ENCODE measurements at regions of chr10 and their contacts with region 1.

Region 1: GRCh38 chr10:103685880-103686669 is 169.3 kb downstream of the SH3PXD2A start:
- DNase-seq: no peak
- ATAC-seq: peak; percentile 90
- H3K4me3 ChIP-seq: no peak overlapping the region
- H3K27ac ChIP-seq: no peak overlapping the region
- H3K4me1 ChIP-seq: peaks cover 16% of the 10 kb centered on the region
- H3K27me3 ChIP-seq: no peaks in the 10 kb centered on the region
- CTCF ChIP-seq: peak; percentile 94 to 99 (median 98)
- EP300 ChIP-seq: no peak
- POLR2A ChIP-seq: no peak
- RAD21 ChIP-seq: peak; percentile 90

Region 2: GRCh38 chr10:102101152-102101551 is 1584.9 kb before region 1 on chr10:
- CTCF ChIA-PET with region 1: no interaction called
- POLR2A ChIA-PET with region 1: no interaction called
- RAD21 ChIA-PET with region 1: no interaction called
- SMC1A ChIA-PET with region 1: no interaction called
- in situ Hi-C with region 1: no loop called
- intact Hi-C with region 1: no loop called
- DNase-seq: no peak
- ATAC-seq: no peak
- H3K4me3 ChIP-seq: no peak overlapping the region
- H3K27ac ChIP-seq: no peak overlapping the region
- H3K4me1 ChIP-seq: no peaks in the 10 kb centered on the region
- H3K27me3 ChIP-seq: no peaks in the 10 kb centered on the region
- CTCF ChIP-seq: no peak
- EP300 ChIP-seq: no peak
- POLR2A ChIP-seq: no peak
- RAD21 ChIP-seq: no peak

Region 3: GRCh38 chr10:103592186-103593021 is 93.7 kb before region 1 on chr10:
- CTCF ChIA-PET with region 1: interaction called, 13 read pairs
- POLR2A ChIA-PET with region 1: no interaction called
- RAD21 ChIA-PET with region 1: interaction called, 4 read pairs
- SMC1A ChIA-PET with region 1: interaction called, 5 read pairs
- in situ Hi-C with region 1: no loop called
- intact Hi-C with region 1: no loop called
- DNase-seq: no peak
- ATAC-seq: peak; percentile 95
- H3K4me3 ChIP-seq: no peak overlapping the region
- H3K27ac ChIP-seq: no peak overlapping the region
- H3K4me1 ChIP-seq: no peaks in the 10 kb centered on the region
- H3K27me3 ChIP-seq: no peaks in the 10 kb centered on the region
- CTCF ChIP-seq: peak; percentile 73 to 79 (median 77)
- EP300 ChIP-seq: no peak
- POLR2A ChIP-seq: no peak; the same call in none of the 2 replicates
- RAD21 ChIP-seq: peak; percentile 73

Region 4: DNA sequence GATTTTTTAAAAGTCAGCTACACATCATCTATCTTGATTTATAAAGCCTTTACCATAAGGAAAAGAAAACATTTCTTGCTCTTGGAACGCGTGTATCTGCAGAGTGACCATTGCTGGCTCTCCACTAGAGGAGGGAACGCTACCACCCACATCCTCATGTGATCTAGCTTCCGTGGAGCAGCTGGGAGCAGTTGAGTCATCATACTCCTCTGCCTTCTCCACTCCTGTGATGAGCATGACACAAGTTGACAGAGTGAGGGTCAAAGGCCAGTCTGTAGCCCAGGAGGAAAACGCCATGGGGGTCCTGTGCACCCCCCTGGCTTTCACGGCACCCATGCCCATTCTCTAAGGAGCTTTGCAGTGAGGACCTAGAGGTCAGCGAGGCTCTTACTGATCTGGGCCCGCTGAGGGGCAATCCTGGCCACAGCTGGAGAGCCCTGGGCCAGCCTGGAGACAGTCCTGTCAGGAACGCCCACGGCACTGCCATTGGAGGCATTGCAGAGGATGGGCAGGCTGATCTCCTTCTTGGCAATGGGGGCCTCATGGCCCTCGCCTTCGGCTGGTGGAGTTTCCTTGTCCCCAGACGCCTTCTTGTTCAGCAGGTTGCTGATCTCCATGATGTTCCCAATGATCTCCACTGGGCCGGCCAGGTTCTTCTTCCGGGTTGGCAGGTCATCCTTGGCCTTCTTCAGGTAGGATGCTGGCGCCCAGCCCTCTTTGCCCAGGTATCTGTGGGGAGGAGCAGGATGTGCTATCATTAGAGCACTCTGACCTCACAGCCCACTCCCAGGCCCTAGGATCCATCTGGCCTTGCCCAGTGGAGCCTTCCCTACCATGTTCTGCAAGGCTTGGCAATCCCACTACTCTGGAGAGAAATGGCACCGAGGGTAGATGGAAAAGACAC is 73.4 kb before region 1 on chr10:
- CTCF ChIA-PET with region 1: interaction called, 36 read pairs
- POLR2A ChIA-PET with region 1: interaction called, 3 read pairs
- RAD21 ChIA-PET with region 1: interaction called, 3 read pairs
- SMC1A ChIA-PET with region 1: interaction called, 3 read pairs
- in situ Hi-C with region 1: loop called (anchors 10 kb)
- intact Hi-C with region 1: no loop called
- DNase-seq: no peak
- ATAC-seq: no peak
- H3K4me3 ChIP-seq: no peak overlapping the region
- H3K27ac ChIP-seq: no peak overlapping the region
- H3K4me1 ChIP-seq: no peaks in the 10 kb centered on the region
- H3K27me3 ChIP-seq: no peaks in the 10 kb centered on the region
- CTCF ChIP-seq: no peak
- EP300 ChIP-seq: no peak
- POLR2A ChIP-seq: no peak
- RAD21 ChIP-seq: no peak

Region 5: GRCh38 chr10:103666087-103666761 is 19.9 kb before region 1 on chr10:
- CTCF ChIA-PET with region 1: interaction called, 31 read pairs
- POLR2A ChIA-PET with region 1: no interaction called
- RAD21 ChIA-PET with region 1: interaction called, 5 read pairs
- SMC1A ChIA-PET with region 1: interaction called, 5 read pairs
- in situ Hi-C with region 1: no loop called
- intact Hi-C with region 1: no loop called
- DNase-seq: no peak
- ATAC-seq: no peak
- H3K4me3 ChIP-seq: no peak overlapping the region
- H3K27ac ChIP-seq: no peak overlapping the region
- H3K4me1 ChIP-seq: no peaks in the 10 kb centered on the region
- H3K27me3 ChIP-seq: no peaks in the 10 kb centered on the region
- CTCF ChIP-seq: peak; percentile 21 to 47 (median 39)
- EP300 ChIP-seq: no peak
- POLR2A ChIP-seq: no peak
- RAD21 ChIP-seq: no peak

Region 6: DNA sequence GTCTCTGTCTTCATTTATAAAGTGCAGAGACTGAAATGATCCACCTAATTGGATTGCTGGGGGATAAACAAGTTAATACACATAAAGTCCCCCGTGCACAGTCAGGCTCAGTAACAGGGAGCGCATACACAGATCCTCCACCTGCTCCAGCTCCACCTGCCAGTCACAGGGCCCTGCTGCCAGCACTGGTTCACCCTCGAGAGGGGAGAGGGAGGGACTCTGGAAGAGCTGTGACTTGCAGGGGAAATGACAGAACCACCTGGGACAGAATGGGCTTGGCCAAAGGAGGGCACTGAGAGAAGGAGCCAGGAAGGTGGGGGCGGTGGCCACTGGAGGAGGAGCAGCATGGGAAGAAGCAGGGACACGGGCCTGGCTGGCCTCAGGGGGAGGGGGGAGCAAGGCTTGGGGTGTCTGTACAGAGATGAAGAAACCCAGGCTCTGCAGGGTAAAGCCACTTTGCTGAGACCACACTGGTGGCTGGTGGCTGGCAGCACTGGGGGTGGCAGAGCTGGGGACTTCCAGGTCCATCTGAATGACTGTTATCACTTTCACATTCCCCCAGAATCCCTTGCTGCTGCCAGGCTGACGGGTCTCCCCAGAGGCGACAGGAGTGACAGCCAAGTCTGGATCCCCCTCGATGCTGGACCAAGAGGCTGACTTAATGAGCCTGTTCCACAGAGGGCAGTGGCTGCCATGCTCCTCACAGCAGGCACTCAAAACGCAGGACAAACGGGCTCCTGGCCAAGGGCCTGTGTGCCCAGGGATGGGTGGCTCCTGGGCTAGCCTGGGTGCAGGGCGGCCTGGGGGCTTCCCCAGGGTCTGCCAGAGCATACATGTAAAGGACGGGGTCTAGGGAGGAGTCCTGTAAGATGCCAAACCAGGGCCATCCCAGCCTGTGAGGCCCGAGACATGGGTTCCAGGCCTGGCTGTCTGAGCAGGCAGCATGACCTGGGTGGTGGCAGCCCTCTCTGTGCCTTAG is 18.2 kb after region 1 on chr10:
- CTCF ChIA-PET with region 1: interaction called, 12 read pairs
- POLR2A ChIA-PET with region 1: interaction called, 6 read pairs
- RAD21 ChIA-PET with region 1: interaction called, 7 read pairs
- SMC1A ChIA-PET with region 1: interaction called, 7 read pairs
- in situ Hi-C with region 1: no loop called
- intact Hi-C with region 1: no loop called
- DNase-seq: no peak
- ATAC-seq: peak; percentile 84
- H3K4me3 ChIP-seq: no peak overlapping the region
- H3K27ac ChIP-seq: no peak overlapping the region
- H3K4me1 ChIP-seq: no peaks in the 10 kb centered on the region
- H3K27me3 ChIP-seq: no peaks in the 10 kb centered on the region; a peak in 1 of 4 replicates
- CTCF ChIP-seq: no peak
- EP300 ChIP-seq: no peak
- POLR2A ChIP-seq: no peak
- RAD21 ChIP-seq: no peak

Region 7: GRCh38 chr10:104049497-104050250 is 363.6 kb after region 1 on chr10:
- CTCF ChIA-PET with region 1: no interaction called
- POLR2A ChIA-PET with region 1: no interaction called
- RAD21 ChIA-PET with region 1: no interaction called
- SMC1A ChIA-PET with region 1: no interaction called
- in situ Hi-C with region 1: no loop called
- intact Hi-C with region 1: no loop called
- DNase-seq: no peak
- ATAC-seq: no peak
- H3K4me3 ChIP-seq: no peak overlapping the region
- H3K27ac ChIP-seq: no peak overlapping the region
- H3K4me1 ChIP-seq: no peaks in the 10 kb centered on the region
- H3K27me3 ChIP-seq: peaks cover 0 to 3% of the 10 kb centered on the region in 2 experiments; a peak in 2 of 4 replicates
- CTCF ChIP-seq: no peak
- EP300 ChIP-seq: no peak
- POLR2A ChIP-seq: no peak
- RAD21 ChIP-seq: no peak

Measured in GM12878 (cell line).